CD8-positive, alpha-beta T cell (primary cell): ENCODE measurements at regions of chr13 and their contacts with region 1.

Region 1: DNA sequence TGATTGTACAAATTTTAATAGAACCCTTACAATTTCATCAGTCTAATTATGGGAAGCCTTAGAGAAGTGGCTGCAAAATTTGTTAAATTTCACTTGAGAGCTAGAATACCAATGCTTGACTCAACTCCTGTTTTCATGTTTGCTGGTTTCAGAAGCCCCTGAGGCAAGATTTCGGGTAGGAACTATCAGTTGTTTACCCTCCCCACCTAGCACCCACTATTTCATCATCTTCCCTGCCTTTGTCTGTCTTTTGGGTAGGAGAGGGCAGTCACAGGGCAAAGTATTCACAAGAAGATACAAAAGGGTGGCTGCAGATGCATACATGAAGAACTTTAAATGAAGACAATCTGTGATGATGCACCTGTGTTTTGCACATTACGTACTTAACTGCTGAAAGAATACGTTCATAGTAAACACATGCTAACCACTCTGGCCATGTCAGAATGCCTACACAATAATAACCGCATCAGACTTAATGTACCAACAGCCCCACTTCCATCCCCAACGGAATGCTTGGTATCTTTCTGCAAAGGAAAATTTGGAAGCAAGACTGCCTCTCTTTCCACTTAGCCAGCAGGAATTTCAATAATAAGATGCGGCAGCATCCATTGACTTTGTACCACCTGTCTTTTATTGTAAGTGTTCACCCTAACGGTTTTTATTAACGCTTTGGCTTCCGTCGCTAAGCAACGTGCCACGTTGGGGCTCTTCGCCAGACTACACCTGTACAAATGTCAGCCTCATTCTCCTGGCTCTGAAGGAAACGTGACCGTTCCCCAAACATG is 30.4 kb downstream of the TPT1 start:
- DNase-seq: no peak
- ATAC-seq: peak; percentile 15
- H3K4me3 ChIP-seq: peak overlapping the region; percentile 53 to 59
- H3K4me3 Mint-ChIP-seq: peak overlapping the region; percentile 85
- H3K27ac ChIP-seq: no peak overlapping the region
- H3K27ac Mint-ChIP-seq: no peak overlapping the region
- H3K4me1 ChIP-seq: peaks cover 11% of the 10 kb centered on the region
- H3K4me1 Mint-ChIP-seq: peaks cover 21% of the 10 kb centered on the region
- H3K27me3 ChIP-seq: peaks cover 0 to 5% of the 10 kb centered on the region in 2 experiments
- H3K27me3 Mint-ChIP-seq: peaks cover 4% of the 10 kb centered on the region
- CTCF ChIP-seq: no peak

Region 2: DNA sequence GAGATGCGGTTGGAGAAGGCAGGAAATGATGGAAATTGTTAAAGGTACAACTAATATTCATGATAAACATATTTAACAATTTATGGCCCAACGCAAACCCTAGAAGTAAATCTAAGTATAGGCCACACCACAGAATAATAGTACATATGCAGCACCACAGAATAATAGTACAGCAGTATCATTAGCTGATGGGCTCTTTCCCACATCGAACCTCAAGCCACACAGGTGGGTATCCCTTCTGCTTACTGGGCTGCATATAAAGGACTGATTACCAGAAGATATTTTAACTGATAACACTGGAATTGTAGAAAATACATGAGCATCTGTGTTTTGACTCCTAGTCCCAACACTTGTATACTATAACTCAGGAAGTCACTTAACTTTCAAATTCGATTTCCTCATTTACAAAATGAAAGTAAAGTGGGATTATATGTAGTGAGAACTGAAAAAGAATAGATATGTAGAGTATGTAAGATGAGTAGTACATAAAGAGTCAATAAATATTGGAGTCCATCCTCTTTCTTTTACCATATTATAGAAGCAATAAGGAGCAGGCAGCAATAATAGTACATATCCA is 825.9 kb before region 1 on chr13:
- CTCF ChIA-PET with region 1: interaction called, 3 read pairs
- POLR2A ChIA-PET with region 1: no interaction called
- intact Hi-C with region 1: loop called (anchors 5 to 10 kb)
- DNase-seq: peak in 2 of 9 experiments; percentile 2 to 31
- ATAC-seq: no peak
- H3K4me3 ChIP-seq: peak overlapping the region in 1 of 2 experiments; percentile 23
- H3K4me3 Mint-ChIP-seq: peak overlapping the region; percentile 59
- H3K27ac ChIP-seq: peak overlapping the region in 1 of 2 experiments; percentile 5
- H3K27ac Mint-ChIP-seq: peak overlapping the region; percentile 42
- H3K4me1 ChIP-seq: peaks cover 10% of the 10 kb centered on the region
- H3K4me1 Mint-ChIP-seq: peaks cover 13% of the 10 kb centered on the region
- H3K27me3 ChIP-seq: no peaks in the 10 kb centered on the region
- H3K27me3 Mint-ChIP-seq: no peaks in the 10 kb centered on the region
- CTCF ChIP-seq: no peak

Region 3: DNA sequence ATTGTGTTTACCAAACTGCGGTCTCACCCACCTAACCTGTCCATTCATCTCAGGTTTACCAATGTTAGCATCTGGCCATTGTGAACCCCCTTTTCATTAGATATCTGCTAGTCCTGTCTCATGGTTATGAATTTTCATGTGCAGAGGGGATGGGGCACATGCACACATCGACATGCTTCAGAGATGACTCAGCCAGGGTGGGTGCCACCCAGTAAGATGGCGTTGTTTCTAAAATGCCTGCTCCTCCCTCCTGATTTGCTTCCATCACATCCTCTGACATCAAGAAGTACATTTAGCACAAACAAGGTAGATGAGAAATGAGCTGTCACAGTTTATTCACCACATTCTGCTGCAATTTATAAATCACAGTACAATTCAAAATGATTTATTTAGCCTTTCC is 269.9 kb before region 1 on chr13:
- CTCF ChIA-PET with region 1: interaction called, 104 read pairs
- POLR2A ChIA-PET with region 1: no interaction called
- intact Hi-C with region 1: no loop called
- DNase-seq: no peak
- ATAC-seq: no peak
- H3K4me3 ChIP-seq: no peak overlapping the region
- H3K4me3 Mint-ChIP-seq: no peak overlapping the region
- H3K27ac ChIP-seq: no peak overlapping the region
- H3K27ac Mint-ChIP-seq: no peak overlapping the region
- H3K4me1 ChIP-seq: no peaks in the 10 kb centered on the region
- H3K4me1 Mint-ChIP-seq: no peaks in the 10 kb centered on the region
- H3K27me3 ChIP-seq: no peaks in the 10 kb centered on the region
- H3K27me3 Mint-ChIP-seq: peaks cover 8% of the 10 kb centered on the region
- CTCF ChIP-seq: no peak

Region 4: GRCh38 chr13:45292176-45292575 is 18.4 kb before region 1 on chr13:
- CTCF ChIA-PET with region 1: interaction called, 28 read pairs
- POLR2A ChIA-PET with region 1: interaction called, 3 read pairs
- intact Hi-C with region 1: no loop called
- DNase-seq: no peak
- ATAC-seq: no peak
- H3K4me3 ChIP-seq: no peak overlapping the region
- H3K4me3 Mint-ChIP-seq: no peak overlapping the region
- H3K27ac ChIP-seq: no peak overlapping the region
- H3K27ac Mint-ChIP-seq: no peak overlapping the region
- H3K4me1 ChIP-seq: peaks cover 13% of the 10 kb centered on the region
- H3K4me1 Mint-ChIP-seq: peaks cover 16% of the 10 kb centered on the region
- H3K27me3 ChIP-seq: no peaks in the 10 kb centered on the region
- H3K27me3 Mint-ChIP-seq: no peaks in the 10 kb centered on the region
- CTCF ChIP-seq: no peak

Region 5: GRCh38 chr13:45325806-45326205 is 15.3 kb after region 1 on chr13:
- CTCF ChIA-PET with region 1: interaction called, 11 read pairs
- POLR2A ChIA-PET with region 1: no interaction called
- intact Hi-C with region 1: no loop called
- DNase-seq: no peak
- ATAC-seq: no peak
- H3K4me3 ChIP-seq: no peak overlapping the region
- H3K4me3 Mint-ChIP-seq: no peak overlapping the region
- H3K27ac ChIP-seq: no peak overlapping the region
- H3K27ac Mint-ChIP-seq: no peak overlapping the region
- H3K4me1 ChIP-seq: peaks cover 29% of the 10 kb centered on the region
- H3K4me1 Mint-ChIP-seq: peaks cover 34% of the 10 kb centered on the region
- H3K27me3 ChIP-seq: no peaks in the 10 kb centered on the region
- H3K27me3 Mint-ChIP-seq: no peaks in the 10 kb centered on the region
- CTCF ChIP-seq: no peak

Region 6: GRCh38 chr13:45340926-45341750 is 30.6 kb after region 1 on chr13 and contains the start of gene TPT1:
- CTCF ChIA-PET with region 1: interaction called, 3 read pairs
- POLR2A ChIA-PET with region 1: interaction called, 4 read pairs
- intact Hi-C with region 1: loop called (anchors 1 to 2 kb)
- DNase-seq: peak; percentile 99 to 100 (median 100)
- ATAC-seq: peak; percentile 86
- H3K4me3 ChIP-seq: peak within 1 kb of the TSS; percentile 83 to 89
- H3K4me3 Mint-ChIP-seq: peak within 1 kb of the TSS; percentile 99
- H3K27ac ChIP-seq: peak within 1 kb of the TSS; percentile 96 to 99
- H3K27ac Mint-ChIP-seq: peak within 1 kb of the TSS; percentile 99
- H3K4me1 ChIP-seq: peaks cover 42% of the 10 kb centered on the region
- H3K4me1 Mint-ChIP-seq: peaks cover 63% of the 10 kb centered on the region
- H3K27me3 ChIP-seq: no peaks in the 10 kb centered on the region
- H3K27me3 Mint-ChIP-seq: no peaks in the 10 kb centered on the region
- CTCF ChIP-seq: no peak
- total RNA-seq, gene TPT1: 8,260 to 8,503 TPM

Region 7: GRCh38 chr13:45490068-45490467 is 179.5 kb after region 1 on chr13:
- CTCF ChIA-PET with region 1: no interaction called
- POLR2A ChIA-PET with region 1: no interaction called
- intact Hi-C with region 1: loop called in 1 of 2 experiments (anchors 2 kb)
- DNase-seq: peak in 4 of 9 experiments; percentile 19 to 62 (median 42)
- ATAC-seq: peak; percentile 93
- H3K4me3 ChIP-seq: no peak overlapping the region
- H3K4me3 Mint-ChIP-seq: no peak overlapping the region
- H3K27ac ChIP-seq: no peak overlapping the region
- H3K27ac Mint-ChIP-seq: no peak overlapping the region
- H3K4me1 ChIP-seq: no peaks in the 10 kb centered on the region
- H3K4me1 Mint-ChIP-seq: no peaks in the 10 kb centered on the region
- H3K27me3 ChIP-seq: no peaks in the 10 kb centered on the region
- H3K27me3 Mint-ChIP-seq: no peaks in the 10 kb centered on the region
- CTCF ChIP-seq: peak; percentile 65

Region 8: GRCh38 chr13:45521297-45521696 is 210.8 kb after region 1 on chr13:
- CTCF ChIA-PET with region 1: no interaction called
- POLR2A ChIA-PET with region 1: no interaction called
- intact Hi-C with region 1: no loop called
- DNase-seq: peak in 1 of 9 experiments; percentile 14
- ATAC-seq: no peak
- H3K4me3 ChIP-seq: no peak overlapping the region
- H3K4me3 Mint-ChIP-seq: no peak overlapping the region
- H3K27ac ChIP-seq: no peak overlapping the region
- H3K27ac Mint-ChIP-seq: no peak overlapping the region
- H3K4me1 ChIP-seq: no peaks in the 10 kb centered on the region
- H3K4me1 Mint-ChIP-seq: peaks cover 2% of the 10 kb centered on the region
- H3K27me3 ChIP-seq: no peaks in the 10 kb centered on the region
- H3K27me3 Mint-ChIP-seq: no peaks in the 10 kb centered on the region
- CTCF ChIP-seq: no peak